ENCODE measurements at regions of chr1 and their contacts with region 1.

Region 1: GRCh38 chr1:54488779-54489626 is 59.0 kb upstream of the ACOT11 start:
- DNase-seq: peak; percentile 86 to 94
- ATAC-seq: peak; percentile 88
- H3K4me3 ChIP-seq: peak overlapping the region; percentile 34 to 81
- H3K27ac ChIP-seq: peak overlapping the region; percentile 93 to 95
- H3K4me1 ChIP-seq: no peaks in the 10 kb centered on the region
- H3K27me3 ChIP-seq: no peaks in the 10 kb centered on the region

Region 2: GRCh38 chr1:54052934-54053744 is 435.9 kb before region 1 on chr1 and contains the starts of genes TCEANC2 and TMEM59:
- intact Hi-C with region 1: loop called in 1 of 2 experiments (anchors 10 kb)
- DNase-seq: peak; percentile 99
- ATAC-seq: peak; percentile 98
- H3K4me3 ChIP-seq: peak within 1 kb of the TSS; percentile 79 to 82
- H3K27ac ChIP-seq: peak within 1 kb of the TSS; percentile 3 to 99
- H3K4me1 ChIP-seq: peaks cover 0 to 1% of the 10 kb centered on the region in 2 donors
- H3K27me3 ChIP-seq: no peaks in the 10 kb centered on the region
- total RNA-seq, gene TCEANC2: 3.5 to 7.0 TPM
- total RNA-seq, gene TMEM59: 294 to 356 TPM

Region 3: DNA sequence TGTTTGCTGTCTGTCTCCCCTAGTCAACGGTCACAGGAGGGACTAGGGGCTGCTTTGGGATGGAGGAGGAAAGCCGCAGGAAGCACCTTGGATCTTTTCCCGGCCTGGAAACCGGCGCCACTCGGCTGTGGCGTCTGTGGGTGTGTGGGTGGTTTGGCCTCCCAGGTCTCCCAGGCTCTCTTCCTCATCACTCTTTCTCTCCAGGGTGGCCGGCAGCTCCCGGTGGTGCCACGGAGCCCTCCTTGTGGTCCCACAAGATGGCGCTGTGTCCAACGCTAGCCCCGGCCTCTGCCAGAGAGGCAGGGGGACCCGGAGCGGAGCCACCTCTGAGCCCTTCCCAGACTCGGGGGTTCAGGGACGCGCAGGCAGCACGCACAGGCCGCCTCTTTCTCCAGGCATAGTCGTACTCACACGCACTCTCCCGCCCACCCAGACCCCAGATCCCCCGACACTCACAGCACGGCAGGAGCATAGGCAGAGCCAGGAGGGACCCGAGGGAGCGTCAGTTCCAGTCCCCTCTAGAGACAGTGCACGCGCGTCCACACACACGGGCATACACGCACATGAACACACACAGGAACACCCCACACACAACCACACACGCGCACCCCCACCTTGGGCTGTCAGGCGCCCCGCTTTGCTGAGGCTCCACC is 367.4 kb before region 1 on chr1:
- intact Hi-C with region 1: loop called (anchors 1 to 5 kb)
- DNase-seq: peak; percentile 85 to 93
- ATAC-seq: peak; percentile 86
- H3K4me3 ChIP-seq: no peak overlapping the region
- H3K27ac ChIP-seq: no peak overlapping the region
- H3K4me1 ChIP-seq: no peaks in the 10 kb centered on the region
- H3K27me3 ChIP-seq: no peaks in the 10 kb centered on the region

Region 4: DNA sequence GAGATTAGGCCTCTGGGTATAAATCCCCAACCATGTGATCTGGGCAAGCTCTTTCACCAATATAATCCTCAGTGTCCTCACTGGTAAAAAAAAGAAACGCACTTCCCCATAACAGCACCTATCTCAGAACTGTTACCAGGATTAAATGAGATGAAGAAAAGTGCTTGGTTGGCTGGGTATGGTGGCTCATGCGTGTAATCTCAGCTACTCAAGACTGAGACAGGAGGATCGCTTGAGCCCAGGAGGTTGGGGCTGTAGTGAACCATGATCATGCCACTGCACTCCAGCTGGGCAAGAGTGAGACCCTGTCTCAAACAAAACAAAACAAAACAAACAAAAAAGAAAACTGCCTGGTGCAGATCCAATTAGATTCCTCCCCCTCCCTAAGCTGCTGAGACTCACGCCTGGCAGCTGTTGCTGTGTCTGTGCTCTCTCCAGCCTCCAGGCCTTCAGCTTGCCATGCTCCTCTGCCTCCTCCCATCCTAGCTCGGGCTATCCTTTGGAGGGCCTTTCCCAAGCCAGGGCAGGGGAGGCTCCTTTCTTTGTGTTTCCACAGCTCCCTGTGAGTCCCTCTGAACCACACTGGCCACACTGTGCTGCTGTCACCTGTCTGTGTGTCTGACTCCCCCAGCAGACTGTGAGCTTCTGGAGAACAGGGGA is 308.2 kb before region 1 on chr1:
- intact Hi-C with region 1: loop called in 1 of 2 experiments (anchors 5 kb)
- DNase-seq: no peak
- ATAC-seq: no peak
- H3K4me3 ChIP-seq: no peak overlapping the region
- H3K27ac ChIP-seq: no peak overlapping the region
- H3K4me1 ChIP-seq: no peaks in the 10 kb centered on the region
- H3K27me3 ChIP-seq: no peaks in the 10 kb centered on the region

Region 5: GRCh38 chr1:54273092-54273794 is 215.8 kb before region 1 on chr1:
- intact Hi-C with region 1: loop called (anchors 2 kb)
- DNase-seq: peak; percentile 90 to 91
- ATAC-seq: peak; percentile 82
- H3K4me3 ChIP-seq: no peak overlapping the region
- H3K27ac ChIP-seq: peak overlapping the region; percentile 58 to 95
- H3K4me1 ChIP-seq: no peaks in the 10 kb centered on the region
- H3K27me3 ChIP-seq: no peaks in the 10 kb centered on the region

Region 6: DNA sequence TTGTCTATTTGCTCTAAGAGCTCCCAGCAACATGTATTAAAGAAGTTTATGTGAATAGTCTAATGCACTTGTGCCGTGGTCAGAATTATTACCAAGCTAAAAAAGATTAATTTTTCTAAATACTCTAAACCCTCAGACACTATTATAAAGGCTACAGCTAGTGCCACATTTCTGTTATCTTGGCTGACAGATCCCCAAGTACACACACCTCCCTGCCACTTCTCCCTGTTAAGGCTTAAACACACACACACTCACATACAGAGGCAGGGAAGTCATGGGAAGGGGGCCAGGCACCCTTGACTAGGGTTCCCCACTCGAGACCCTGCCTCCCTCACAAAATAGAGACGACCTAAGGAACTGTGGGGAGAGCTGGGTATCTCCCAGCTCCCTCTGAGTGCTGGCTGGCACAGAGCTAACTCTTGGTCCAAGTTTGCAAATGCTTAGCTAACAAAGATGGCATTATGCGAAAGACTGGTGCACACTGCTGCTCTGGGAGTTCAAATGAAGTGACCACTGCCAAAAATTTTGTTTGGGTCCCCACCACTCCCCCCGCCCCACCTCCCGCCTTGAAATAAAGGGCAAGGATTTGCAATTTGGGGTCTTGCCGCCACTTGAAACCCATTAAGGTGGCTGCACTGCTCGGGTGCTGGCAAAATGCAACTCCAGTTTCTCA is 92.6 kb before region 1 on chr1:
- intact Hi-C with region 1: no loop called
- DNase-seq: no peak
- ATAC-seq: no peak
- H3K4me3 ChIP-seq: no peak overlapping the region
- H3K27ac ChIP-seq: peak overlapping the region in 1 of 2 donors; percentile 21
- H3K4me1 ChIP-seq: peaks cover 0 to 1% of the 10 kb centered on the region in 2 donors
- H3K27me3 ChIP-seq: no peaks in the 10 kb centered on the region

Region 7: GRCh38 chr1:54406339-54407153 is 82.5 kb before region 1 on chr1 and contains the start of gene SSBP3:
- intact Hi-C with region 1: loop called (anchors 1 kb)
- DNase-seq: peak; percentile 95 to 97
- ATAC-seq: peak; percentile 93
- H3K4me3 ChIP-seq: peak within 1 kb of the TSS; percentile 97 to 98
- H3K27ac ChIP-seq: peak within 1 kb of the TSS in 1 of 2 donors; percentile 83
- H3K4me1 ChIP-seq: peaks cover 3 to 5% of the 10 kb centered on the region in 2 donors
- H3K27me3 ChIP-seq: no peaks in the 10 kb centered on the region
- total RNA-seq, gene SSBP3: 73.8 to 83.4 TPM

Region 8: GRCh38 chr1:54591127-54591756 is 102.2 kb after region 1 on chr1:
- intact Hi-C with region 1: no loop called
- DNase-seq: no peak
- ATAC-seq: no peak
- H3K4me3 ChIP-seq: no peak overlapping the region
- H3K27ac ChIP-seq: no peak overlapping the region
- H3K4me1 ChIP-seq: no peaks in the 10 kb centered on the region
- H3K27me3 ChIP-seq: no peaks in the 10 kb centered on the region

Region 9: DNA sequence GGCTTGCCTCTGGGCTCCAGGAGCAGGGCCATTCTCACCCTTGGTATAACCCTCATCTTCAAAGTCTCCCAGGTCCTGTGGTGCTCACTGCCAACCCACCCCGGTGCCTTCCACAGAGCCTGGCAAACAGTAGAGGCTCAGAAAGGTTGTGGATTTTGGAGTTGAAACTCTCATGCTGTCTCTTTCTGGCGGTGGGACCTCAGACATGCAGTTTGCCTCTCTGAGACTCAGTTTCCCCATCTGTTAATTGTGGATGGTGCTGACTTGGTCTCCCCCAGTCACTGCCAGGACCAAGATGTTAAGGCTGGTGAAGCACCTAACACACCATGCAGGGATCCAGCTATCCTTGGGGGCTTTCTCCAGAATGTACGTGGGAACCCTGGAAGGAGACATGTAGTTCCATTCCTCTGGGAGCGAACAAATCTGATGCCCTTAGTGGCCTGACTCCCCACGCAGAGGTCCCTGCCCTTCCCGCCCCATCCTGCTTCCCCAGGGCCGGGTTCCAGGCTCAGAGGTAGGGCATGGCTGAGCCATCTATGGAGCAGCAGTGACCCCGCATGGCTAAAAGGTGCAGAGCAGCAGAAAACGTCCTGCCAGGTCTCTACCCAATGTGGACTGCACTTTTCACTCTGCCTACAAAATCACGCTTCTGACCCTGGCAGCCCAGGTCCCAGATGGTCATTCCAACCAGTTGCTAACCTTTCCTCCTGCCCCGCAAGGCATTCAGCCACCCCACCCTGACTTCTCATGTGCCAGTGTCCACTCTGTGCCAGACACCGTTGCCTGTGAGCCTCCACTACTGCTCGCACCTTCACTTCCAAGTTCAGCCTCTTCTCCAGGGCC is 321.3 kb after region 1 on chr1:
- intact Hi-C with region 1: loop called (anchors 5 to 10 kb)
- DNase-seq: peak in 1 of 2 donors; percentile 86
- ATAC-seq: peak; percentile 73
- H3K4me3 ChIP-seq: no peak overlapping the region
- H3K27ac ChIP-seq: no peak overlapping the region
- H3K4me1 ChIP-seq: no peaks in the 10 kb centered on the region
- H3K27me3 ChIP-seq: no peaks in the 10 kb centered on the region

Measured in aorta (tissue), 5 donors.